Heart right ventricle (tissue), 16 donors: ENCODE measurements at regions of chr5 and their contacts with region 1.

Region 1: DNA sequence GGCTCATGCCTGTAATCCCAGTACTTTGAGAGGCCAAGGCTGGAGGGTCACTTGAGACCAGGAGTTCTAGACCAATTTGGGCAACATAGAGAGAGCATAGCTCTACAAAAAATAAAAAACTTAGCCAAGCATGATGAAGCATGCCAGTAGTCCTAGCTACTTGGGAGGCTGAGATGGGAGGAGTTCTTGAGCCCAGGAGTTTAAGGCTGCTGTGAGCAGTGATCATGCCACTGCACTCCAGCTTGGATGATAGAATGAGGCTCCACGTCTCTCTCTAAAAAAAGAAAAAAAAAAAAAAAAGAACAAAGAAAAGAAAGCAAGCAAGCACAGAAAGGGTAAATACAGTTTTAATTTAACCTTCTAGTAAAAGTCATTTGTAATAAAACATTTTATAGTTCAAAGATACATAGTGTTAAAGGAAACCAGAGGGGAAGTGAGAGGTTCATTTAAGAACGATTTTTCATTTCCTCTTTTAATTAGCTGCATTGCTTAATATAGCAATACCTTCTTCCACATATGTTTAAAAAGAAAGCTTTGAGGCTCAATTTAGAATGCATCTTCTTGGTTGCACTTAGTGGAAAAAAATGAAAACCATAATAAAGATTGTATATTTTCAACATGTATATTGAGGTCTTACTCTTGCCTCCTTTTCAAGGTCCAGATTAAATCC is 14.9 kb downstream of the GAPT start:
- DNase-seq: no peak
- ATAC-seq: no peak
- H3K4me3 ChIP-seq: no peak overlapping the region
- H3K27ac ChIP-seq: no peak overlapping the region
- H3K4me1 ChIP-seq: peaks cover 0 to 10% (median 0%) of the 10 kb centered on the region in 9 donors
- H3K27me3 ChIP-seq: peaks cover 0 to 28% (median 0%) of the 10 kb centered on the region in 7 donors
- CTCF ChIP-seq: no peak

Region 2: GRCh38 chr5:58717303-58718007 is 211.3 kb after region 1 on chr5:
- intact Hi-C with region 1: loop called in 2 of 10 experiments (anchors 10 kb)
- DNase-seq: no peak
- ATAC-seq: no peak
- H3K4me3 ChIP-seq: no peak overlapping the region
- H3K27ac ChIP-seq: no peak overlapping the region
- H3K4me1 ChIP-seq: peaks cover 0 to 6% (median 0%) of the 10 kb centered on the region in 9 donors
- H3K27me3 ChIP-seq: peaks cover 0 to 4% (median 0%) of the 10 kb centered on the region in 7 donors
- CTCF ChIP-seq: peak in 2 of 9 donors; percentile 10 to 16

Region 3: DNA sequence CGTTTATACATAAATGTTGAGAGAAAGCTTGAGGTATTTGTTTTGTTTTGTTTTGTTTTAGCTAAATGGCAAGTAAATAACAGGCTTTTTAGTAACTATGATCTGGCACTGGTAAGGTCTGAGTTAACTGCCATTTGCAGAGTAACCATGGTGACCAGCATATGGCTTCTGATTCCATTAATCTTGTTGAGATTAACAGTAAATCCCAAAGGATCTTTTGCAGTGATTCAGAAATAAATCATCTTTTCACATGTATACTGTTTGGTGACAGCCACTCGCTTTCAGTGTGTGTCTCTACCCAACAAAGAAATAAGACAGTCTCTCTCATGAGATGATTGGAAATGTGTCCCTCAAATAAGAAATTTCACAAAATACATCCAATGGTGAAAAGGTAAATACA is 312.4 kb after region 1 on chr5:
- intact Hi-C with region 1: loop called in 1 of 10 experiments (anchors 10 kb)
- DNase-seq: no peak
- ATAC-seq: no peak
- H3K4me3 ChIP-seq: no peak overlapping the region
- H3K27ac ChIP-seq: no peak overlapping the region
- H3K4me1 ChIP-seq: no peaks in the 10 kb centered on the region
- H3K27me3 ChIP-seq: no peaks in the 10 kb centered on the region
- CTCF ChIP-seq: no peak